ENCODE measurements at regions of chr5 and their contacts with region 1.

Region 1: GRCh38 chr5:43120720-43121564 is at the start of gene ZNF131:
- DNase-seq: peak; percentile 99
- H3K4me3 Mint-ChIP-seq: peak within 1 kb of the TSS; percentile 90
- H3K27ac Mint-ChIP-seq: peak within 1 kb of the TSS; percentile 97
- H3K4me1 Mint-ChIP-seq: peaks cover 25% of the 10 kb centered on the region
- H3K27me3 Mint-ChIP-seq: peaks cover 2% of the 10 kb centered on the region
- total RNA-seq, gene ZNF131: 37.9 and 40.1 TPM in 2 replicates

Region 2: DNA sequence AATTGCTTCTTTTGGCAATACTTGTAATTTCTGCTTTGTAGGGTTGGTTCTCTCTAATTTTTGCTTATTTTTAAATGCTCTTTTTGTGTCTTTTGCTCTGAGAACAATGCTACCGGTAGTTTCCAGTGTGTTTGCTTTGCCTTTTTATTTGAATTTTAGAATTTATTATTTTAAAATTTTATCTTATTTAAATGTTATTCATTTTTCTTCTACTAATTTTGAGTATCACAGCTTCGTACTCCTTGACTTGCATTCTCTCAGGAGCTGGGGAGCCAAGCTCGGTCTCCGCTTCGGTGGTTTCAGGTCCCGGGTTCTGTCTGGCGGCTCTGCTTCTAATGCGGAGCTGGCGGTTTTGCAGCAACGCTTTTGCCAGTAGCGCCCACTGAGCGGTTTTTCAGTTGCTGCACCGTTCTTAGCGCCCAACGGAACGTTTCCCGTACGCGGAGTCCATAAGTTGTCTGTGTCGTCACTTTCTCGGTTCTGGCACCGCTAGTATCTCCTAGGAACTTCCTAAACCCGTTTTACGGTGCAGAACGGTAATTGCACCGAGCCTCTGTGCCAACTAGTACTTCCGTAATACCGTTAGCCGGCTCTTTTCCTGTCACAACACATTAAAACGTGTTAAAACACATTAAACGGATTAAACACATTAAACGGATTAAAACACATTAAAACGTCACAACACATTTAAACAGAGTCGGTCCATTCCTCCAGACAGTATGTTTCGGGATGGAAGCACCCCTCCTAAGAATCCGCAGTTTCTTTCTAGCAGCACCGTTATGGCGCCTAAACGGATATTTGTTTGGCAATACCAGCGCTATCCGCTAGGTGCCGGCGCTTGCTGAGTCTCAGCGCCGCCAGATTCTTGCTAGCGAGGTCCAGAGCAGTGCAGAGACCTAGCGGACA is 126.4 kb before region 1 on chr5:
- intact Hi-C with region 1: loop called (anchors 1 kb)
- DNase-seq: peak; percentile 97
- H3K4me3 Mint-ChIP-seq: peak overlapping the region; percentile 96
- H3K27ac Mint-ChIP-seq: peak overlapping the region; percentile 100
- H3K4me1 Mint-ChIP-seq: peaks cover 40% of the 10 kb centered on the region
- H3K27me3 Mint-ChIP-seq: no peaks in the 10 kb centered on the region

Region 3: GRCh38 chr5:43066799-43067741 is 53.9 kb before region 1 on chr5:
- intact Hi-C with region 1: loop called (anchors 1 kb)
- DNase-seq: peak; percentile 96
- H3K4me3 Mint-ChIP-seq: peak overlapping the region; percentile 92
- H3K27ac Mint-ChIP-seq: peak overlapping the region; percentile 100
- H3K4me1 Mint-ChIP-seq: peaks cover 32% of the 10 kb centered on the region
- H3K27me3 Mint-ChIP-seq: no peaks in the 10 kb centered on the region

Region 4: DNA sequence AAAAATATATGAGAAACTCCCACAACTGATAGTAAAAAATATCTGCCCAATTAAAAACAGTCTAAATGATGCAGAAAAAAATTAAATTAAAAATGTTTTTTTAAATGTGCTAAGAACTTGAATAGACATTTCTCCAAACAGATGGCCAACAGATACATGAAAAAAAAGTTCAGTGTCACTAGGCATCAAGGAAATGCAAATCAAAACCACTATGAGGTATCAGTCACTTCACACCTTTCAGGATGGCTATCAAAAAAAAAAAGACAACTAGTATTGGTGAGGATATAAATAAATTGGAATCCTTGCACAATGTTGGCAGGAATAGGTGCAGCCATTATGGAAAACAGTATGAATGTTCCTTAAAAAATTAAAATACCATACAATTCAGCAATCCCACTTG is 16.4 kb after region 1 on chr5:
- intact Hi-C with region 1: loop called (anchors 2 kb)
- DNase-seq: no peak
- H3K4me3 Mint-ChIP-seq: no peak overlapping the region
- H3K27ac Mint-ChIP-seq: no peak overlapping the region
- H3K4me1 Mint-ChIP-seq: peaks cover 24% of the 10 kb centered on the region
- H3K27me3 Mint-ChIP-seq: no peaks in the 10 kb centered on the region

Region 5: GRCh38 chr5:43305948-43306565 is 185.1 kb after region 1 on chr5:
- intact Hi-C with region 1: loop called (anchors 2 kb)
- DNase-seq: peak; percentile 76
- H3K4me3 Mint-ChIP-seq: peak overlapping the region; percentile 5
- H3K27ac Mint-ChIP-seq: peak overlapping the region; percentile 50
- H3K4me1 Mint-ChIP-seq: peaks cover 71% of the 10 kb centered on the region
- H3K27me3 Mint-ChIP-seq: no peaks in the 10 kb centered on the region

Region 6: DNA sequence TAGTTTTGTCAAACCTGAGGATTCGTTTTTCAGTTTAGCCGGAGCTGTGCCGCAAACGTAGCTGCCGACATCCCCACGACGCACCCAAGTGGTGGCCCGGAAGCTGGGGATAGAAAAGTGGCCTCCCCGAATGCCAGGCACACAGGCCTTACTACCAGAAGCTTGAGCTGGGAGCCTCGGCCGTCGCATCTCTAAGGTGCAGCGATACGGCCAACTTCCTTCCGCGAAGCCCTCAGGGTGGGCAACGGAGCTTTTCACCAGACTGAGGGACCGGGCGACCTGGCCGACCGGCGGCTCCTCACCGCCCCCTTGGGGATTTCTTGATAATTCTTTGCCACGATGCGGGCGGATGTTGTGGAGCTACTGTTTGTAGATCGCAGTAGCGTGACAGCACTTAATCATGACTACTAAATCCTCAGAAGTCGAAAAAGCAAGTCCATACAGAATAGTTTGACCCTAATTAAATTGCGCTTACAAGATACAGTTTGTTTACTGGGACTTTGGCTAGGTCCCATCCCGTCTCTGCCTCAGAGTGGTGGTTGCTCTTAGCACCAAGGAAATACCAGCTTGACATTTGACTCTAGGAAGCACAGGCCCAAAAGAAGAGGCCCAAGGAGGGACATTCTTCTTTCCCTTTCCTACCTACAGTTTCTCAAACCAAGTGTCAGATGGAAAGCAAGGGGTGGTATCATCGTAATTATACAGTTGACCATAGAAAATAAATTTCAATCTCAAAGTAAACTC is 363.3 kb after region 1 on chr5:
- intact Hi-C with region 1: loop called (anchors 1 kb)
- DNase-seq: peak; percentile 96
- H3K4me3 Mint-ChIP-seq: peak overlapping the region; percentile 94
- H3K27ac Mint-ChIP-seq: peak overlapping the region; percentile 100
- H3K4me1 Mint-ChIP-seq: peaks cover 23% of the 10 kb centered on the region
- H3K27me3 Mint-ChIP-seq: no peaks in the 10 kb centered on the region

Region 7: DNA sequence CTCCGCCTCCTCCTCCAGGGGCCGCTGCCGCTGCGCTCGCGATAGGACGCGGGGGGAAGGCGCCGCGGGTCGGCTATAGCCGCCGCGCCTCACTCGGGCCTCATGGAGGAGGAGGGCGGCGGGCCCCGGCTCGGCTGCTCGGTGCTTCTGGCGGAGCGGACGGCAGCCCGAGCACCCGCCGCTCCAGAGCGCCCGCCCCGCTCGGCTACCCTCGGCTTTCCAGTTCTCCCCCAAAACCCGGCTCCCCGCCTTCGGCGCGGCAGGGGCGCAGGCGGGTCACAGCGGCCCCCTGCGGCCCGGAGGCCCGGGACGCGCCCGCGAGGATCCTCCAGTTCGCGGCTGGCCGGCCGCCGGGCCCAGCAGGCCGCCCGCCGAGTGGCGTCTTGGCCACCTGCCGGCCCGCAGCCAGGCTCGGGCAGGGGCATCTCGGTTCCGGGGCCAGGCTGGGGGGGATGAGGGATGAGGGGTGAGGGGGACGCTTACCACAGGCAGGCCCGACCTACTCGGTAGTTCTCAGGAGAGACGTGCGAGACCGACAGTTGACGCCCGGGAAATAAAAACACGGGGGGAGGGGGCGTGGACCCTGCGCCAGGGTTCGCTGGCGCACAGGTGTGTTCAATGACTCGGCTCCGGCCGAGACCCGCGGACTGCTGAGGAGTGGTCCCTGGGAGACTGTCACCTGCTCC is 436.1 kb after region 1 on chr5 and contains the start of gene PAIP1:
- intact Hi-C with region 1: loop called (anchors 5 kb)
- DNase-seq: peak; percentile 96
- H3K4me3 Mint-ChIP-seq: peak within 1 kb of the TSS; percentile 91
- H3K27ac Mint-ChIP-seq: peak within 1 kb of the TSS; percentile 90
- H3K4me1 Mint-ChIP-seq: peaks cover 12% of the 10 kb centered on the region
- H3K27me3 Mint-ChIP-seq: peaks cover 13% of the 10 kb centered on the region
- total RNA-seq, gene PAIP1: 60.2 and 64.1 TPM in 2 replicates

Measured in activated CD4-positive, alpha-beta T cell treated with anti-CD3 and anti-CD28 coated beads, Interleukin-2, amount 10 ng/mL, durations not matched to agents 24 days and 14 days (primary cell).